Endothelial cell of umbilical vein (primary cell): ENCODE measurements at regions of chr17 and their contacts with region 1.

Region 1: GRCh38 chr17:40075201-40075941 is 12.6 kb downstream of the THRA start:
- DNase-seq: peak; percentile 63
- H3K4me3 ChIP-seq: no peak overlapping the region
- H3K27ac ChIP-seq: no peak overlapping the region
- H3K4me1 ChIP-seq: peaks cover 13% of the 10 kb centered on the region
- H3K27me3 ChIP-seq: no peaks in the 10 kb centered on the region
- CTCF ChIP-seq: peak; percentile 68 to 91
- POLR2A ChIP-seq: no peak

Region 2: GRCh38 chr17:39939588-39940419 is 135.6 kb before region 1 on chr17:
- CTCF ChIA-PET with region 1: no interaction called
- POLR2A ChIA-PET with region 1: no interaction called
- dilution Hi-C with region 1: no loop called
- intact Hi-C with region 1: no loop called
- DNase-seq: peak; percentile 31
- H3K4me3 ChIP-seq: no peak overlapping the region
- H3K27ac ChIP-seq: no peak overlapping the region
- H3K4me1 ChIP-seq: peaks cover 5% of the 10 kb centered on the region
- H3K27me3 ChIP-seq: peaks cover 0 to 2% of the 10 kb centered on the region in 2 experiments
- CTCF ChIP-seq: peak; percentile 38 to 46
- POLR2A ChIP-seq: no peak

Region 3: GRCh38 chr17:39965017-39965699 is 110.2 kb before region 1 on chr17:
- CTCF ChIA-PET with region 1: no interaction called
- POLR2A ChIA-PET with region 1: no interaction called
- dilution Hi-C with region 1: no loop called
- intact Hi-C with region 1: no loop called
- DNase-seq: no peak
- H3K4me3 ChIP-seq: no peak overlapping the region
- H3K27ac ChIP-seq: no peak overlapping the region
- H3K4me1 ChIP-seq: no peaks in the 10 kb centered on the region
- H3K27me3 ChIP-seq: peaks cover 6 to 12% of the 10 kb centered on the region in 2 experiments
- CTCF ChIP-seq: no peak
- POLR2A ChIP-seq: no peak

Region 4: DNA sequence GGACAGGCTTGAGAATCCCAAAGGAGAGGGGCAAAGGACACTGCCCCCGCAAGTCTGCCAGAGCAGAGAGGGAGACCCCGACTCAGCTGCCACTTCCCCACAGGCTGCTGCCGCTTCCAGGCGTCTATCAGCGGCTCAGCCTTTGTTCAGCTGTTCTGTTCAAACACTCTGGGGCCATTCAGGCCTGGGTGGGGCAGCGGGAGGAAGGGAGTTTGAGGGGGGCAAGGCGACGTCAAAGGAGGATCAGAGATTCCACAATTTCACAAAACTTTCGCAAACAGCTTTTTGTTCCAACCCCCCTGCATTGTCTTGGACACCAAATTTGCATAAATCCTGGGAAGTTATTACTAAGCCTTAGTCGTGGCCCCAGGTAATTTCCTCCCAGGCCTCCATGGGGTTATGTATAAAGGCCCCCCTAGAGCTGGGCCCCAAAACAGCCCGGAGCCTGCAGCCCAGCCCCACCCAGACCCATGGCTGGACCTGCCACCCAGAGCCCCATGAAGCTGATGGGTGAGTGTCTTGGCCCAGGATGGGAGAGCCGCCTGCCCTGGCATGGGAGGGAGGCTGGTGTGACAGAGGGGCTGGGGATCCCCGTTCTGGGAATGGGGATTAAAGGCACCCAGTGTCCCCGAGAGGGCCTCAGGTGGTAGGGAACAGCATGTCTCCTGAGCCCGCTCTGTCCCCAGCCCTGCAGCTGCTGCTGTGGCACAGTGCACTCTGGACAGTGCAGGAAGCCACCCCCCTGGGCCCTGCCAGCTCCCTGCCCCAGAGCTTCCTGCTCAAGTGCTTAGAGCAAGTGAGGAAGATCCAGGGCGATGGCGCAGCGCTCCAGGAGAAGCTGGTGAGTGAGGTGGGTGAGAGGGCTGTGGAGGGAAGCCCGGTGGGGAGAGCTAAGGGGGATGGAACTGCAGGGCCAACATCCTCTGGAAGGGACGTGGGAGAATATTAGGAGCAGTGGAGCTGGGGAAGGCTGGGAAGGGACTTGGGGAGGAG is 60.1 kb before region 1 on chr17 and contains the start of gene CSF3:
- CTCF ChIA-PET with region 1: interaction called, 22 read pairs
- POLR2A ChIA-PET with region 1: no interaction called
- dilution Hi-C with region 1: no loop called
- intact Hi-C with region 1: loop called (anchors 1 kb)
- DNase-seq: peak; percentile 31
- H3K4me3 ChIP-seq: peak within 1 kb of the TSS in 1 of 3 experiments; percentile 5
- H3K27ac ChIP-seq: peak within 1 kb of the TSS; percentile 88
- H3K4me1 ChIP-seq: peaks cover 56% of the 10 kb centered on the region
- H3K27me3 ChIP-seq: no peaks in the 10 kb centered on the region
- CTCF ChIP-seq: no peak
- POLR2A ChIP-seq: no peak
- total RNA-seq, gene CSF3: 2.4 and 2.9 TPM in 2 replicates

Region 5: GRCh38 chr17:40038882-40039513 is 36.4 kb before region 1 on chr17:
- CTCF ChIA-PET with region 1: interaction called, 29 read pairs
- POLR2A ChIA-PET with region 1: no interaction called
- dilution Hi-C with region 1: no loop called
- intact Hi-C with region 1: no loop called
- DNase-seq: peak; percentile 84
- H3K4me3 ChIP-seq: no peak overlapping the region
- H3K27ac ChIP-seq: peak overlapping the region; percentile 27
- H3K4me1 ChIP-seq: peaks cover 5% of the 10 kb centered on the region
- H3K27me3 ChIP-seq: no peaks in the 10 kb centered on the region
- CTCF ChIP-seq: peak; percentile 74 to 85
- POLR2A ChIP-seq: peak; percentile 28

Region 6: DNA sequence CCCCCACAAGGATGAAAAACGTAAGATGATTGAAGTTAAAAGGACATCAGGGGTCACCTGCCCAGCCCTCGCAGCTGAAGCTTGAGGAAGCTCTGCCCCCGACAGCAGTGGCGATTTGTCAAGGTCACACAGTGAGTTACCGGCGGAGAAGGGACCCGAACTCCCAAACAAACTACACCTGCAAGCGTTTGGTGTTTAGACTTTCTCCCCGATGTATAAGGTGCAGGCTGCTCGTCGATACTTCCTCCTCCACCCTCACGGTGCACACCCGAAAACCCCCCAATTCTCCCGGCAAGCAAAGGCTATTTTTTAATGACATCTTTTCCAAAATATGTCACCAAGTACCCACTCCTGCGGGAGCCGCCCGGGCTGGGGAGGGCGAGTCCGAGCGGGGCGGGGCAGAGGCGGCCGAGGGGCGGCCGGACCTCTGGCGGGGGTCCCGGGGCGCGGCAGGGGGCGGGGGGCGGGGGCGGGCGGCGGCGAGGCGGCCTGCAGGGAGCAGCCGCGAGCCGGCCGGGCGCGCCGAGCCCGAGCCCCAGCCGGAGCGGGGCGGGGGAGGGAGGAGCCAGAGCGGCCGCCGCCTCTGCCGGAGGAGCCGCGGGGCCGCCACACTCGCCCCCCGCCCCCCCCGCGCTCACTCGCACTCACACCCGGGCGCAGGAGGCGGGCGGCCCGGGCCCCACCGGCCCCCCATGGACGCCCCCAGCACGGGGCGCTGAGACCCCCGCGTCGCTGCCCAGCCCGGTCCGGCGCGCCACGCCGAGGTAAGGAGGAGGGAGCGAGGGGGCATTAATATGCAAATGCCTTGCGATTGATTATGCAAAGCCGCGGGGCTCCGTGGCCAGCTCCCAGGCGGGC is 12.8 kb before region 1 on chr17 and contains the start of gene THRA:
- CTCF ChIA-PET with region 1: interaction called, 54 read pairs
- POLR2A ChIA-PET with region 1: interaction called, 4 read pairs
- dilution Hi-C with region 1: no loop called
- intact Hi-C with region 1: no loop called
- DNase-seq: peak; percentile 67
- H3K4me3 ChIP-seq: peak within 1 kb of the TSS; percentile 48 to 96 (median 86)
- H3K27ac ChIP-seq: no peak within 1 kb of the TSS
- H3K4me1 ChIP-seq: peaks cover 16% of the 10 kb centered on the region
- H3K27me3 ChIP-seq: peaks cover 0 to 3% of the 10 kb centered on the region in 2 experiments
- CTCF ChIP-seq: no peak
- POLR2A ChIP-seq: no peak
- total RNA-seq, gene THRA: 24.9 and 29.6 TPM in 2 replicates

Region 7: DNA sequence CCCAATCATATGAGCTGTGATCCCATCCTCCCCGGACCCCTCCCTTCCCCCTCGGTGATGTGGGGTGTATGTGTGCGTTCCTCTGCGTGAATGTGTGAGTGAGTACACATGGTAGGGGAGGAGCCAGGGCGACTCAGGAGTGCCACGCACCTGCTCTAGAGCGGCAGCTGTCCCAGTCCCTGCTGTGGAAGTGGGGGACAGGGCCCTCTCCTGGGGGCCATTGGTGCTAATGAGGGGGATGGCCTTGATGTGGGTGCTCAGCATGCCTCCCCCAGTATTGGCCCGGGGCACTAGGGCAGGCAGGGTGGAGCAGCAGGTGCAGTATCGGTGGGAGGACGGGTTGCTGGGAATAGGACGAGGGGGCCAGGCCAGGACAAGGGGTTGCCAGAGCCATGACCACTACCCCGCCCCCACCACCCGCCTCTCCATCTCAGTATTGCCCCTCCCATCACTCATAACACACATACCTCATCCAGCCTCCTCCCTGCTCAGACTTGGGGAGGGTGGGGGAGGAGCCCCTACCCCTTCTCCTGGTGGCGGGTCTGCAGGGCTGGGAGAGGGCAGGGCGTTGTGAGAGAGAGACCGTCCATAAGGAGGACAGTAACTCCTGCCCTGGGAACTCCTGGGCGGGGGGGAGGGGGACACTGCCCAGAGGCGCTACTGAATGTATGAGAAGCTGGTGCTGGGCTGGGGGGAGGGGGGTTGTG is 16.5 kb after region 1 on chr17:
- CTCF ChIA-PET with region 1: interaction called, 62 read pairs
- POLR2A ChIA-PET with region 1: no interaction called
- dilution Hi-C with region 1: no loop called
- intact Hi-C with region 1: no loop called
- DNase-seq: no peak
- H3K4me3 ChIP-seq: no peak overlapping the region
- H3K27ac ChIP-seq: no peak overlapping the region
- H3K4me1 ChIP-seq: peaks cover 5% of the 10 kb centered on the region
- H3K27me3 ChIP-seq: no peaks in the 10 kb centered on the region
- CTCF ChIP-seq: no peak
- POLR2A ChIP-seq: no peak

Region 8: DNA sequence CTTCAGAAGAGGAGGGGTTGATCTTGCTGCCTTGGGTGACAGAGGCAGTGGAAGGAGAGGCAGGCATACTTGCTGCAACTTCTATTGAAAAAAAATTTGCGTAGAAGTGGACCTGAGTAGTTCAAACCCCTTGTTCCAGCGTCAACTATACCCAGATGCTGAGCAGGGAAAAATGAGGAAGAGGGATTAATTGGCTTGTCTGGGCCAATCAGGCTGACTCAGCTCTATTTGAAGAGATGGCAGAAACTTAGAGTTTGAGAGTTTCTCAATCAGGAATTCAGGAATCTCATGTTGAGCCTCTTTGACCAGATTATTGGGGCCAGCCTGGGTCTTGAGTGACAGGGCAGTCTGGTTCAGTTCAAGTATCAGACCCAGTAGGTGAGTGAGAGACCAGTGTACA is 82.6 kb after region 1 on chr17:
- CTCF ChIA-PET with region 1: no interaction called
- POLR2A ChIA-PET with region 1: no interaction called
- dilution Hi-C with region 1: no loop called
- intact Hi-C with region 1: no loop called
- DNase-seq: no peak
- H3K4me3 ChIP-seq: no peak overlapping the region
- H3K27ac ChIP-seq: no peak overlapping the region
- H3K4me1 ChIP-seq: no peaks in the 10 kb centered on the region
- H3K27me3 ChIP-seq: no peaks in the 10 kb centered on the region
- CTCF ChIP-seq: no peak
- POLR2A ChIP-seq: no peak